Cardiac septum (tissue), 1 donor: ENCODE measurements at regions of chr14 and their contacts with region 1.

Region 1: DNA sequence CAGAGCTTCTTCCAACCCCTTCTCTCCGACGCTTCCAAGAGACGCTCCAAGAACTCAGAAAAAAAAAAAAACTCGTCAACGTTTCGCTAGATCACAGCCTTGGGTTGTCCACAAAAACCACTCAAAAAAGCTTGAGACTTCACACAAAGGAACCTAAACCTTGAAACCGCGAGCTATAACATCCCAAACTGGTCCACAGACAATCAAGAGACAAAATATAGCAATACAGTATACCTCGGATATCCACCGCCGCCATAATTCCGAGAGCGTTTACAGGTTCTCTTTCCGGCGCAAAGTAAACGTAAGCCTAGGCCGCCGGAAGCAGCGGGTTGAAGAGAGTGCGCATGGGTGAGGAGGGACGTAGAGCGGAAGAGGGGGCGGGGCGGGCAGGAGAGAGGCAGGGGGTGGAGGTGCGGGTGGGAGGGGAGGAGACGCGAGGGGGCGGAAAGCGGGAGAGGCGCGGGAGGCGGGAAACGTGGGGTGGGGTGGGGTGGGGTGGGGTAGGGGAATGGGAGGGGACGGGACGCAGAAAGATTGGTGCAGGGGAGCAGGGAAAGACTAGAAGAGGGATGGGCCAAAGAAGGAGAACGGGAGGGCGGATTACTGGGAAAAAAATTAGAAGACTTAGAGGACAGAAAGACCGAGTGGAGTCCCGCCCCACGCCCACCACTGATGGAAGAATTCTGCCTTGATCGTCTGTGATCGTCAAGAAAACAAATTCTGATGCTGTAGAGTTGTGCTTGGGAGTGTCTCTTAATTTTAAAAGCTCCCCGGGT is at the start of gene MED6:
- DNase-seq: peak; percentile 97
- total RNA-seq, gene MED6: 21.7 TPM

Region 2: GRCh38 chr14:70622111-70622712 is 21.6 kb after region 1 on chr14:
- intact Hi-C with region 1: no loop called
- DNase-seq: no peak

Region 3: GRCh38 chr14:70714055-70714621 is 113.6 kb after region 1 on chr14:
- intact Hi-C with region 1: loop called (anchors 5 kb)
- DNase-seq: no peak

Region 4: GRCh38 chr14:70809543-70810244 is 209.1 kb after region 1 on chr14:
- intact Hi-C with region 1: loop called (anchors 5 kb)
- DNase-seq: peak; percentile 90